CD8-positive, alpha-beta T cell (primary cell): ENCODE measurements at regions of chr7 and their contacts with region 1.

Region 1: DNA sequence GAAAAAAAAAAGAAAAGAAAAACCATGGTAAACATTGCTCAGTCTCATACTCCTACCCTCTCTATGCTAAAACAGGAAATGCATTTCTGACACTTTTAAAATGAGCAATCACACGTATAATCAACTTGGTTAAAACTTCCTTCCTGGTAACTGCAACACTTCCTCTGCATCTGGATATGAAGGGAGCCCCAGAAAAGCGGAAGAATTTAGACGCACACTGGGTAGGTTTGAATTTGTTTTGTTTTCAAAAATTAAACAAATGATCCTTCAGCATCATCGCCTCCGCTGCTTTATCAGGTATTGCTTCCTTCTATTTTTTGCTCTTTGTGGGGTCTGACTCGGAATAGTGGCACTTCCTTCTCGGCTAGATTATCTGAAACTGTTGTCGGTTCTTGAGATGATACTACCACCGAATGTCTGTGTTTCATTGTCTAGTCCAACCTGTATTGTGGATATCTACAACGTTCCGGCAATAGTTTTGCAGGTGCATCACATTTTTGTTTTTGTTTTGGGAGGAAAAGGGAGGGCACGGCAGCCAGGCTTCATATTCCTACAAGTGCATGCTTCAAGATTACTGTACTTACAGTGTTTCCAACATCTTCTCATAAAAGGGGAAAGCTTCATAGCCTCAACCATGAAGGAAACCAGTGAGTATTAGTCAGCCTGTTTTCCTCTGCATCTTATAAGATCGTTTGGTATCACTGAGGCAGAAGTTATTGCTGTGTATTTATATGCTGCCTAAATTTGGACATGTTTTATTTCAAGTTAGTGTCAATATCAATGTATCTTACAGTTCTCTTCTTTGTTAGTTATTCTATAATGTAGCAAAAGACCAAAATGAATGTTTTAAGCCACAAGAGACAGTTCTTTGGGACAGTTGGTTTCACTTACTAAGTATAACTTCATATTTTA is at the start of gene PIK3CG:
- DNase-seq: peak in 6 of 9 experiments; percentile 18 to 84 (median 40)
- ATAC-seq: peak; percentile 92
- H3K4me3 ChIP-seq: peak within 1 kb of the TSS; percentile 69 to 73
- H3K4me3 Mint-ChIP-seq: peak within 1 kb of the TSS; percentile 93
- H3K27ac ChIP-seq: peak within 1 kb of the TSS; percentile 71 to 87
- H3K27ac Mint-ChIP-seq: peak within 1 kb of the TSS; percentile 95
- H3K4me1 ChIP-seq: peaks cover 57% of the 10 kb centered on the region
- H3K4me1 Mint-ChIP-seq: peaks cover 75% of the 10 kb centered on the region
- H3K27me3 ChIP-seq: no peaks in the 10 kb centered on the region
- H3K27me3 Mint-ChIP-seq: no peaks in the 10 kb centered on the region
- CTCF ChIP-seq: no peak
- total RNA-seq, gene PIK3CG: 30.8 to 32.5 TPM

Region 2: DNA sequence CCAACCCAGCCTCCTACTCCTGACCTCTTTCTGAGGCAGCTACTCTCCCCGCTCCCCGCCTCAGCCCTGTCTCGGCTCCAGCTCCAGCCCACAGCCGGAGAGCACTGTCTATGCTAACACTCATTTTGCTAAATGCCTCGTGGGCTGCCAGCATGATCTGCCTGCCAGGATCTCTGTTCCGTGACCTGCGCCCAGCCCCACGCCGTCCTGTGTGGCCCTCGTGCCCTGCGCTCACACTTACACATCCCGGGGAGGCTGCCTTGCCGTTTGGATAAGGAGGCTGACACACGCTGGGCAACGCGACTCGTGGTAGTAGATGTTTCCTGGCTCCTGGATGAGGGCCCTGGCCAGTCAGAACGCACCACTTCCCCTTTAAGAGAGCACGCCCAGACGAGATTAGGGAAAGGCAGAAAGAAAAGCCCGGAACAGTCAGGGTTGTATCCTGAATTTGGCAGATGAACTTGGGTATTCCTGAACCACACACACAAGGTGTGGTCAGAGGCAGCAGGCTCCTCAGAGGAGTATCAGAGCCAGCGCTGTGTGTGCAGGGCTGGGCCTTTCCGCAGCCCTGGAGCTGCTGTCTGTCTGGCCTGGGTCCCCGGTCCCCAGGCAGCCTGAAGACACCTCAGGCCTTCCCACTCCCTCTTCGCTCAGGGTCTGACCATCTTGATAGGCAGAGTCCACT is 1186.4 kb before region 1 on chr7:
- CTCF ChIA-PET with region 1: no interaction called
- POLR2A ChIA-PET with region 1: no interaction called
- intact Hi-C with region 1: loop called in 1 of 2 experiments (anchors 10 kb)
- DNase-seq: peak in 1 of 9 experiments; percentile 26
- ATAC-seq: no peak
- H3K4me3 ChIP-seq: no peak overlapping the region
- H3K4me3 Mint-ChIP-seq: peak overlapping the region; percentile 33
- H3K27ac ChIP-seq: peak overlapping the region in 1 of 2 experiments; percentile 80
- H3K27ac Mint-ChIP-seq: peak overlapping the region; percentile 84
- H3K4me1 ChIP-seq: peaks cover 39% of the 10 kb centered on the region
- H3K4me1 Mint-ChIP-seq: peaks cover 70% of the 10 kb centered on the region
- H3K27me3 ChIP-seq: no peaks in the 10 kb centered on the region
- H3K27me3 Mint-ChIP-seq: no peaks in the 10 kb centered on the region
- CTCF ChIP-seq: no peak

Region 3: GRCh38 chr7:106793015-106793975 is 72.1 kb before region 1 on chr7:
- CTCF ChIA-PET with region 1: interaction called, 11 read pairs
- POLR2A ChIA-PET with region 1: no interaction called
- intact Hi-C with region 1: loop called (anchors 5 kb)
- DNase-seq: peak in 6 of 9 experiments; percentile 16 to 75 (median 42)
- ATAC-seq: peak; percentile 82
- H3K4me3 ChIP-seq: no peak overlapping the region
- H3K4me3 Mint-ChIP-seq: no peak overlapping the region
- H3K27ac ChIP-seq: no peak overlapping the region
- H3K27ac Mint-ChIP-seq: no peak overlapping the region
- H3K4me1 ChIP-seq: no peaks in the 10 kb centered on the region
- H3K4me1 Mint-ChIP-seq: peaks cover 3% of the 10 kb centered on the region
- H3K27me3 ChIP-seq: no peaks in the 10 kb centered on the region
- H3K27me3 Mint-ChIP-seq: no peaks in the 10 kb centered on the region
- CTCF ChIP-seq: peak; percentile 88

Region 4: GRCh38 chr7:107125458-107125857 is 260.1 kb after region 1 on chr7:
- CTCF ChIA-PET with region 1: interaction called, 3 read pairs
- POLR2A ChIA-PET with region 1: no interaction called
- intact Hi-C with region 1: loop called in 1 of 2 experiments (anchors 5 kb)
- DNase-seq: no peak
- ATAC-seq: no peak
- H3K4me3 ChIP-seq: no peak overlapping the region
- H3K4me3 Mint-ChIP-seq: peak overlapping the region; percentile 78
- H3K27ac ChIP-seq: peak overlapping the region in 1 of 2 experiments; percentile 83
- H3K27ac Mint-ChIP-seq: peak overlapping the region; percentile 91
- H3K4me1 ChIP-seq: peaks cover 8% of the 10 kb centered on the region
- H3K4me1 Mint-ChIP-seq: peaks cover 20% of the 10 kb centered on the region
- H3K27me3 ChIP-seq: no peaks in the 10 kb centered on the region
- H3K27me3 Mint-ChIP-seq: no peaks in the 10 kb centered on the region
- CTCF ChIP-seq: no peak

Region 5: DNA sequence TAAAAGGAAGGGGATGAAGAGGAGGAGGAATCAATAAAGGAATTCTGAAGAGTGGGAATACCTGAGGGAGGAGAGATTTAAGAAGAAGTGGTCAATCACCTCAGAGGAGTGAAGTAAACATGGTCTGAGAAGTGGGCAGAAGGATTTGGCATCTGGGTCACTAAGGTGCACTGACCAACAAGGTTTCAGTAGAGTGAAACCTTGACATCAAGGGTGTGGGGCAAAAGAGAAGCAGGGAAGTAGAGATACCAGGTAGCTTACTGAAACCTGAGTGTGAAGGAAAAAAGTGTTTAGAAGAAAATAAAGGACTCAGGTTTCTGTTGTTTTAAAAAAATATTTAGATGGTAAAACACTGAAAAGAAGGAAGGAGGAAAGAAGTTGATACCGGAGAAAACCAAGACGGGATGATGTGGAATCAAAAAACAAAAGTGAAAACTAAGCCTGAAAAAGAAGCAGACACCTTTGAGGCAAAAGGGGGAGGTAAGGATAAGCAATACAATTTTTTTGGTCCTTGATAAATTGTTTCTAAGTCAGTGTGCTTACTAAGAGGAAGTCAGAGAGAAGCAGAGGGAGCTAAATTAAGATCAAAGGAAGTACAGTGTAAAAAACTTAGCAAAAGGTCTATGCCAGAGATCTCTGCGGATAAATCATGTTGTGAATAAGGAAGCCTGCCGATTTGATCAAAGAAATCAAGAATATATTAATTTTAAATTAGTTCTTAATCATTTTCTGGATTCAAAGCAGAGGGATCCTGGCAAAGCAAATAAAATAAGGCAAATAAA is 467.3 kb after region 1 on chr7:
- CTCF ChIA-PET with region 1: no interaction called
- POLR2A ChIA-PET with region 1: no interaction called
- intact Hi-C with region 1: no loop called
- DNase-seq: peak in 1 of 9 experiments; percentile 3
- ATAC-seq: no peak
- H3K4me3 ChIP-seq: no peak overlapping the region
- H3K4me3 Mint-ChIP-seq: peak overlapping the region; percentile 13
- H3K27ac ChIP-seq: no peak overlapping the region
- H3K27ac Mint-ChIP-seq: no peak overlapping the region
- H3K4me1 ChIP-seq: peaks cover 10% of the 10 kb centered on the region
- H3K4me1 Mint-ChIP-seq: peaks cover 15% of the 10 kb centered on the region
- H3K27me3 ChIP-seq: no peaks in the 10 kb centered on the region
- H3K27me3 Mint-ChIP-seq: no peaks in the 10 kb centered on the region
- CTCF ChIP-seq: no peak

Region 6: DNA sequence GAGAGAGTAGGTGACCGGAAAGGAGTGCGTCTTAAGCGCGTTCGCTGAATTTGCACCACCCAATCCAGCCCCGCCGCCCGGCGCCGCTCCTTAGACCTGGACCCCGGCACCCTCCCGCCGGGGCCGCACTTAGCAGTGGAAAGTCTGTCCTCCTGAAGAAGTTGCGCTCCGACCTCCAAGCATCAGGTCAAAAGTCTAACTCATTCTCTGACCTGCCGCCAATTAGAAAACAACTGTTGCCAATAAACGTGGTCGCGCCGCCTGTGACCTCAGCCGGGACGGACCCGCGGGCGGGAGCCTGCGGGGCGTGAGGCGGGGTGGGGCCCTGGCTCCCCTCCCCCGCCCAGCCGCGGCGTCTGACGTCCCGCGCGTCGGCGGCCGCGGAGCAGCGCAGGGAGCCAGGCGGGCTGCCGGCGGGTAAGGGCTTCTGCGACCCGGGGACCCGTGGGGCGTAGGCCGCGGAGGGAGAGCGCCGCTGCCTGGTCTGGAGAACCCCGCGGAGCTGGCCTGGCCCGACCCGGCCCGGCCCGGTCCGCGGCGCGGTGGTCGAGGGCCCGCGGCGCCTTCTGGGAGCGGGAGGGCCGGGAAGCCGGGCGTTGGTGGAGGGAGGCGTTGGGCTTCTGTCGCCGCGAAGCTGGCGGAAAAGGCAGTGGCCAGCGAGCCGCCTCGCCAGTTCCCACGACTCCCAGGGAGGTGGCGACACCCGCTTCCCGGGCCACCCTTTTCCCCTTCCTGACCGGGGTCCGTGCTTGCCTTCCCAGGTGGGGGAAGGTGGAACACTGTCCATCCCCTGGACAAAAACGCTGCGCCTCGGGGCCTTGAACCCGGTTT is 714.7 kb after region 1 on chr7 and contains the start of gene BCAP29:
- CTCF ChIA-PET with region 1: no interaction called
- POLR2A ChIA-PET with region 1: no interaction called
- intact Hi-C with region 1: loop called in 1 of 2 experiments (anchors 5 kb)
- DNase-seq: peak; percentile 22 to 87 (median 59)
- ATAC-seq: peak; percentile 95
- H3K4me3 ChIP-seq: peak within 1 kb of the TSS; percentile 81 to 91
- H3K4me3 Mint-ChIP-seq: peak within 1 kb of the TSS; percentile 90
- H3K27ac ChIP-seq: peak within 1 kb of the TSS; percentile 67 to 69
- H3K27ac Mint-ChIP-seq: peak within 1 kb of the TSS; percentile 91
- H3K4me1 ChIP-seq: peaks cover 14% of the 10 kb centered on the region
- H3K4me1 Mint-ChIP-seq: peaks cover 25% of the 10 kb centered on the region
- H3K27me3 ChIP-seq: no peaks in the 10 kb centered on the region
- H3K27me3 Mint-ChIP-seq: no peaks in the 10 kb centered on the region
- CTCF ChIP-seq: no peak
- total RNA-seq, gene BCAP29: 7.9 to 9.0 TPM

Region 7: DNA sequence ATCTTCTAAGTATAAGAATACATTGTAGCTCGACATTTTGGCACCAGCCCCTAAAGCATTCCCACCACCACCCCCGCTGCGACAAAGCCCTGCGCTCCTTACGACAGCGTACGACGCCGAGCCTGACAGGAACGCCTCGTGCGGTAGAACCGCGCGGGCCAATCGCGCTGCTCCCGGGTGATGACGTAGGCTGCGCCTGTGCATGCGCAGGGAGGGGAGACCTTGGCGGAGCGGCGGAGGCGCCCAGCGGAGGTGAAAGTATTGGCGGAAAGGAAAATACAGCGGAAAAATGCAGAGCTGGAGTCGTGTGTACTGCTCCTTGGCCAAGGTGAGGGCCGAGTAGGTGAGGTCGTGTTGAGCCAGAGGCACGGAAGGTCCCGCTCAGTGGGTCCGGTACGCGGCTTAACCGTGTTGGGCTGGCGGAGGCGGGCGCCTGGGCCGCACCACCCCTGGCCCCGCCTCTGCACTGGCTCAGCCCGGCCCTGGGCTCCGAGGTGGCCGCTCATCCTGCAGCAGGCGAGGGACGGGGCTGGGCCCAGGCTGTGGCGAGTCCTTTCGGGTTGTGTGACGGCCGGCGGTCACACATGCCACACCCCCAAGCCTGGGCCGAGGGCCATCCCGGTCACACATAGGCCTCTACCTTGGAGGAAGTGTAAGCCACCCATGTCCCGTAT is 1025.7 kb after region 1 on chr7 and contains the start of gene DLD:
- CTCF ChIA-PET with region 1: no interaction called
- POLR2A ChIA-PET with region 1: no interaction called
- intact Hi-C with region 1: loop called in 1 of 2 experiments (anchors 10 kb)
- DNase-seq: peak; percentile 86 to 97 (median 93)
- ATAC-seq: peak; percentile 97
- H3K4me3 ChIP-seq: peak within 1 kb of the TSS; percentile 79 to 86
- H3K4me3 Mint-ChIP-seq: peak within 1 kb of the TSS; percentile 98
- H3K27ac ChIP-seq: peak within 1 kb of the TSS; percentile 88 to 94
- H3K27ac Mint-ChIP-seq: peak within 1 kb of the TSS; percentile 98
- H3K4me1 ChIP-seq: peaks cover 48% of the 10 kb centered on the region
- H3K4me1 Mint-ChIP-seq: peaks cover 48% of the 10 kb centered on the region
- H3K27me3 ChIP-seq: no peaks in the 10 kb centered on the region
- H3K27me3 Mint-ChIP-seq: no peaks in the 10 kb centered on the region
- CTCF ChIP-seq: no peak
- total RNA-seq, gene DLD: 83.5 to 85.9 TPM